ENCODE measurements at regions of chr5 and their contacts with region 1.

Region 1: DNA sequence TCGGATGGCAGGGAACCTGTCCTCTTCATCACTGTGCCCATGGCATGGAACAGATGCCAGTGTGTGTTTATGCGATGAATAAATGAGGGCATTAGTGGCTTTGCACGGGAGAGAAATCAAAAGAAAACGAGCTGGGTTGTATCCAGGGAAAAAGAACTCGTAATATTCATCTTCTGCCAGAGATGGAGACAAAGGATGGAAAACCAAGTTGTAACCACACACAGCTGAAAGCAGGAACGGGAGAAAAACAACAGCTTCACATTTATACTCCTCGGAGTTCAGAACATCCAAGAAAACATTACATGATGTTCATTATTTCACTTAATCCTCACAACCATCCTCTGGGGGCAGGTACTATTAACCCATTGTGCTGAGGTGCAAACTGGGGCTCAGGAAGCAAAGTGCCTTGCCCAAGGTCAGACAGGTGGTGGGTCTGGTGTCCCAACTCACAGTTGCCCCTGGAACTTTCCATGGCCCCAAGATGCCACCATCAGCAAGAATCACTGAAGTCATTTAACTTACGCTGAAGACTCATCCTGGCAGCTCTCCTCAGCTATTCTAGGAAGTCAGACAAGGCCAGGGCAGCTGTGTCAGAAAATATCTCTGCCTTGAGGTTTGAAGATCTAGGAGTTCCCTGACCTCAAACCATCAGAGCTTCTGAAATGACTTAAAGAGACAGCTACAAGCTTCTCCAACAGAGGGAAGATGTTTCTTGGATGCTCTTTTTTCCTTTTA is 250.4 kb downstream of the NSG2 start:
- DNase-seq: no peak

Region 2: GRCh38 chr5:174045470-174046025 is 250.3 kb before region 1 on chr5 and contains the start of gene NSG2:
- in situ Hi-C with region 1: loop called (anchors 25 kb)
- DNase-seq: peak; percentile 75
- total RNA-seq, gene NSG2: not detected in 2 replicates